Cardiac septum (tissue), 1 donor: ENCODE measurements at regions of chr13 and their contacts with region 1.

Region 1: DNA sequence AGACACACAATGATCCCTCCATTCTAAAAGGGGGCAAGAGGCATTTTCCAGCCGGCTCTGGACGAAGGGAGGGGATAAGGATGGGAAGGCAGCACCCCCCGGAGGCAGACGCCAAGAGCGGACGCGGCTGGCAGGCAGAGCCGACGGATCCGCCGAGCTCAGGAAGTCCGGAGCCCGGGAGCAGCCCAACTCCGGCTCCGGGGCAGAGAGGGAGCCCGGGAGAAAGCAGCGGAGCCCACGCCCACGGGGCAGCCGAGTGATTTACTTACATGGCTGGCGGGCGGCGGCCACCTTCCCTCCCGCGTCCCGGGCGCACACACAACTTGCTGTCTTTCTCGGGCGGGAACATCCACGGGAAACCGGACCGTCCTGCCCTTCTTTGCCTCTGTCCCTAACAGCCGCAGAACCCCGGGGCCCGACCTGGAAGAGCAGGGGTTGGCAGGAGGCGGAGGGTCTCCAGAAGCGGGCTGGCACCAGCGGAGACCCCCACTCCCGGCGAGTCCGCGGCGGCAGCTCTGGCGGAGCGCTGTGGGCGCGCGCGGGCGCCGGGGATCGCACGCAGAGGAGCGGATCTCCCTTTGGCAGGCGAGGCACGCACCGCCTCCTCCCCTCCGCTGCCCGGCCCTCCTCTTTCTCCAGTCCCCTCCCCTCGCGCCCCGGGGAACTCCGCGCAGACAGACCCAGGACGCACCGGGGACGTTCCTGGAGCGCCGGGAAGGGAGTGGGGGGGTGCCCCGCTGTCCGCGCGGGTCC is at the start of gene LHFPL6:
- DNase-seq: peak; percentile 93
- total RNA-seq, gene LHFPL6: 68.9 TPM

Region 2: GRCh38 chr13:39415008-39415802 is 187.6 kb before region 1 on chr13:
- intact Hi-C with region 1: loop called (anchors 2 kb)
- DNase-seq: no peak

Region 3: DNA sequence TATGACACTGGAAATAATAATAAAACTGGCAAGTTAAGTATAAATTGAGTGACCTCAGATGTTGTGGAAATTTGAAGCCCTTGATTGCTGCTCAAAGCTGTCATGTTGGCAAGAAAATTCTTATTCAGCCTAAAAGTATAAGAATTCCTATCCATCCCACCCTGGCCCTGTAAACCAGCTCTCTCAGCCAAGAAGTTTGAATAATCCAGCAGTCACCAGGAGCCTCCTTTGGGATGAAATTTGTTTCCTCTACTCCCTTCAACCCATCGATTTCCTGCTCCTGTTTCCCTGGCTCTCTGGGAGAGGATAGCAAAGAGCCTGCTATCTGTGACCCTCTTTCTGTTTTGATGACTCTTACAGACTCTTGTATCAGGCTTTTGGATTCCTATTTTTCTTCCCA is 169.1 kb before region 1 on chr13:
- intact Hi-C with region 1: no loop called
- DNase-seq: no peak

Region 4: GRCh38 chr13:39516096-39516495 is 86.7 kb before region 1 on chr13:
- intact Hi-C with region 1: loop called (anchors 5 kb)
- DNase-seq: no peak